ENCODE measurements at regions of chr11 and their contacts with region 1.

Region 1: DNA sequence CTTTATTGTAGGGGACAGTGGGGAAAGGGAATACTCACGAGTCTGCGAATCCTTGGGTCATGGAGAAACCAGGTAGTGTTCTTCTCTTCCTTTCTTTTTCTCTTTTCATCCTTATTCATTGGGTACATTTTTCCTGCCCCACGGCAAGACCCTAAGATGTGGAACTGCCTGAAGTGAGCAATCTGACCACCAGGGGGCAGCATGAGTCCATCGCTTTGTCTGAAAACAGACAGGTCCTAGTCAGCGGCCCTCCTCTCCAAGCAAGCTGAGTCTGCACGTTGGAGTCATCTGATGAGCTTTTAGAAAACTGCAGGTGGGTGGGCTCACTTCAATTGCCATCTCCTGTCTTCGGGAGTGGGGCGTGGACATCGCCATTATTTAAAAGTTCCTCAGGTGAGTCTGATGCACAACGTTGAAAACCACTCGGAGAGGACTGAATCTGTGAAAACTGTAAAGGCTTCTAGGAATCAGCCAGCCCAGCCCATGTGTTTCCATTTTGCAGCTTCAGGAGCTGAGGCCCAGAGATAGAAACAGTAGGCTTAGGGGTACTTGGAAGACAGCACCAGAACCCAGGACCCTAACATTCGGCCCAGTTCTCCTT is 34.0 kb upstream of the FBXO3 start:
- H3K4me3 Mint-ChIP-seq: no peak overlapping the region
- H3K27ac Mint-ChIP-seq: no peak overlapping the region
- H3K4me1 Mint-ChIP-seq: peaks cover 5% of the 10 kb centered on the region
- H3K27me3 Mint-ChIP-seq: peaks cover 17% of the 10 kb centered on the region

Region 2: GRCh38 chr11:33829433-33830141 is 21.3 kb after region 1 on chr11:
- intact Hi-C with region 1: loop called (anchors 1 kb)
- H3K4me3 Mint-ChIP-seq: peak overlapping the region; percentile 71
- H3K27ac Mint-ChIP-seq: no peak overlapping the region
- H3K4me1 Mint-ChIP-seq: peaks cover 13% of the 10 kb centered on the region
- H3K27me3 Mint-ChIP-seq: peaks cover 54% of the 10 kb centered on the region